ENCODE measurements at regions of chr1 and their contacts with region 1.

Region 1: DNA sequence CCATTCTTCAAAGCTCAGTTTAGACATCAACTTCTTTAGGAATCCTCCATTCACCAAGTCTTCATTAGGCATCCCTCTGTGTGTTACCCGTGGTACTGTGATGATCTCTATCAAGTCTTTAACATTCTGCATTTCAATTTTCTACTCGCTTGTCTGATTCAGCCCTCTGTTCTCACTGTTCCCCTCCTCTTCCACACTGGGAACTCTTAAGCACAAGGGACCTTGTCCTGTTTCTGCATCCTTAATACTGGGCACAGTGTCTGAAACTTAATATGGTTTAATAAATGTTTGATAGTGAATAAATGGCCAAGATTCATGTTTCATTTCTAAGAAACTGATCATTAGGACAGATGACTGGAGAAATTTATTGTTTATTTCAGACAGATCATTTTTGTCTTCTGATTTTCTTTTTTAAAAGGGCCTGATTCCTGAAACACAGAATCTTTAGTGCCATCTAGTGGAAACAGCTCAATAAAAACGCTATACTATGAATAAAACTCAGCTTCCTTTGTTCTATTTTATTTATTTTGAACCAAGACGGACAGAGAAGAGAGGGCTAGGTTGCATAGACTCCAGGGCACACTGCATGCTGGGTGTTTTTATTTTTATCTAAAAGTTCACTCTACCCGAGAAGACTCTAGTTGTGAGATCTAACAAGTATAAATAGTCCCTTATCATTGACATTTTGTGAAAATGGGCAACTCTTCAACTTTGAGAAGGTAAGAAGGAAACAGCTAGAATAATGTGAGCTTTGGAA is 7.0 kb upstream of the TRIM45 start:
- DNase-seq: peak in 4 of 5 donors; percentile 28 to 38 (median 33)
- H3K4me3 ChIP-seq: no peak overlapping the region
- H3K4me3 Mint-ChIP-seq: no peak overlapping the region
- H3K27ac ChIP-seq: no peak overlapping the region
- H3K27ac Mint-ChIP-seq: peak overlapping the region in 1 of 7 donors; percentile 8
- H3K4me1 ChIP-seq: no peaks in the 10 kb centered on the region
- H3K4me1 Mint-ChIP-seq: peaks cover 0 to 5% (median 2%) of the 10 kb centered on the region in 4 donors
- H3K27me3 ChIP-seq: no peaks in the 10 kb centered on the region
- H3K27me3 Mint-ChIP-seq: peaks cover 7 to 16% of the 10 kb centered on the region in 2 donors

Region 2: DNA sequence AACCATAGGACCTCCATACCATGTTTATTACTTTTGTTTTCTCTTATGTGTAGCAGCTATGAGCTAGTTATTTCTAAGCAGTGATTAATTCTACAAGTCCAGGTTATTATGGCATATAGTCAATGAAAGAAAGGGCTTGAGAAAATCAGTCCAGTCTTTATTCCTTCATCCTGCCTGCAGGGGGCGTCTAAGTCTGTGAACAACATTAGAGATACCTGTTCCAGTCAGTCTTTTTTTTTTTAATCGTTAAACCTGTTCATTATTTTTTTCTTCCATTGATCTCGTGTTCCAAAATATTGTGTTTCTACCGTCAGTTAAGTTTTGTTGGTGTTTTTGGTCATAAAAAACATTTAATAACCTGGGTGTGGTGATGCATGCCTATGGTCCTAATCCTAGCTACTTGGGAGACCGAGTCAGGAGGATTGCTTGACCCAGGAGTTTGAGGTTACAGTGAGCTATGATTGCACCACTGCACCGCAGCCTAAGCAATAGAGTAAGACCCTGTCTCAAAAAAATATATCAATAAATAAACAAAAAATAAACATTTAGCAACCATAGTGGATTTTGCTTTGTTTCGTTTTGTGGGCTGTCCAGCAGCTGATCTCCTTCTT is 403.6 kb before region 1 on chr1:
- CTCF ChIA-PET with region 1: interaction called, 12 read pairs
- POLR2A ChIA-PET with region 1: no interaction called
- intact Hi-C with region 1: loop called (anchors 1 kb)
- DNase-seq: peak; percentile 67 to 81 (median 73)
- H3K4me3 ChIP-seq: no peak overlapping the region
- H3K4me3 Mint-ChIP-seq: no peak overlapping the region
- H3K27ac ChIP-seq: no peak overlapping the region
- H3K27ac Mint-ChIP-seq: peak overlapping the region in 3 of 7 donors; percentile 1 to 47 (median 39)
- H3K4me1 ChIP-seq: peaks cover 13% of the 10 kb centered on the region
- H3K4me1 Mint-ChIP-seq: peaks cover 6 to 27% (median 12%) of the 10 kb centered on the region in 4 donors
- H3K27me3 ChIP-seq: no peaks in the 10 kb centered on the region
- H3K27me3 Mint-ChIP-seq: no peaks in the 10 kb centered on the region

Region 3: GRCh38 chr1:117067533-117068370 is 60.7 kb before region 1 on chr1:
- CTCF ChIA-PET with region 1: interaction called, 111 read pairs
- POLR2A ChIA-PET with region 1: interaction called, 4 read pairs
- intact Hi-C with region 1: loop called (anchors 1 kb)
- DNase-seq: peak in 4 of 5 donors; percentile 22 to 45 (median 40)
- H3K4me3 ChIP-seq: no peak overlapping the region
- H3K4me3 Mint-ChIP-seq: no peak overlapping the region
- H3K27ac ChIP-seq: no peak overlapping the region
- H3K27ac Mint-ChIP-seq: no peak overlapping the region
- H3K4me1 ChIP-seq: peaks cover 7% of the 10 kb centered on the region
- H3K4me1 Mint-ChIP-seq: peaks cover 8 to 23% (median 17%) of the 10 kb centered on the region in 4 donors
- H3K27me3 ChIP-seq: no peaks in the 10 kb centered on the region
- H3K27me3 Mint-ChIP-seq: no peaks in the 10 kb centered on the region

Region 4: DNA sequence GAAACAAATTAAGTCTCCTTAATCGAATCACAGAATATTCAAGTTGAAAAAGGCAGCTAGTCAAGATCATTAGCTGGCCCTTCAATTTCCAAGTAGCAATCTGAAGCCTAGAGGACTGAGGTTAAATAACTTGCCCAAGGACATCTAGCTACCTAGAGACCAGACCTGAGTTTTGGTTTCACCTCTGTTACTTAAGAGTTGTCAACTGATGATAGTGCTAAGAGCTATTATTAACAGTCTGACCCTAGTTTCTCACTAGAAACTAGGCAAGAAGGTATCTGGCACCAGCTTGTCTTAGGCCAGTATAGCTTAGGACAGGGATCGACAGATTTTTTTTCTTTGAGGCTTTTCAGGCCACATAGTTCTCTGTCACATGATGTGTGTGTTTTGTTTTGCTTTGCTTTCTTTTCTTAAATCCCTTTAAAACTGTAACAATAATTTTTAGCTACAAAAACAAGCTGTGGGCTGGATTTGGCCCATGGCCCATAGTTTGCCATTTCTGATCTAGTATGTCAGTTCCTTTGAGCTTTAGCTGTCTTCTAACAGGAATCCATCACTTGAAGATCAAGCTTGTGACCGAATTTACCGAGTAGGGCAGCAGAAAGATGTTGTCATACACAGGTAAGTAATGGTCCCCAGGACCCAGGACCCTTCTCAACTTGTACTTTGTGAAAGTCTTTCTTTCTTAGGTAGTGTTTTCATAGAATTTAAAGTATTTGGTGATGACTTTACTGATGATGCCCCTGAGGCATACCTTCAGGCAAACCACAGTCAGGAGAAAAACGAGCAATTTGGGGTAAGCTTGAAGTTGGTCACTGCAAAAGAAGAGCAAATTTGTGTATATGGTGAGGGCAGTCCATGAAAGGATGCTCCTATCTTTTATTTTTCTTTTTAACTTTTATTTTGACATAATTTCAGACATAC is 30.0 kb before region 1 on chr1:
- CTCF ChIA-PET with region 1: interaction called, 10 read pairs
- POLR2A ChIA-PET with region 1: no interaction called
- intact Hi-C with region 1: no loop called
- DNase-seq: no peak
- H3K4me3 ChIP-seq: no peak overlapping the region
- H3K4me3 Mint-ChIP-seq: no peak overlapping the region
- H3K27ac ChIP-seq: no peak overlapping the region
- H3K27ac Mint-ChIP-seq: no peak overlapping the region
- H3K4me1 ChIP-seq: peaks cover 5% of the 10 kb centered on the region
- H3K4me1 Mint-ChIP-seq: peaks cover 4 to 7% (median 5%) of the 10 kb centered on the region in 4 donors
- H3K27me3 ChIP-seq: no peaks in the 10 kb centered on the region
- H3K27me3 Mint-ChIP-seq: no peaks in the 10 kb centered on the region

Region 5: DNA sequence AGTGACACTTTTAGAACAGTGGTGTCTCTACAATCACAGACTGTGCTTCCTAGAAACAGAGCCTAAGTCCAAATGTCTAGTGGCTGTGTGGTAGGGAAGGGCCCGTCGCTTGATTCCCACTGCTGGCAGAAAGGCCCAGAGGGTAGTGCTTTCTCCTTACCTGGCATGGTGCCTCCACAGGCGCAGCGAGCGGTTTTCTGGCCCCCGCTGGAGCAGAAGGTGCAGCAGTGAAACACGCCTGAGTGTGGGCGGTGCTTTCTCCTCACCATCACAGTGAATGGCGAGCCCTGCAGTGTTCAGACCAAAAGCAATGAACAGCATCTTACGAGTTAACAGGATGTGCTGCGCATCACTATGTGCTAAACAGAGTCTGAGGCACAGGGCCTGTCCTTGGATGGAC is 15.3 kb before region 1 on chr1:
- CTCF ChIA-PET with region 1: interaction called, 25 read pairs
- POLR2A ChIA-PET with region 1: no interaction called
- intact Hi-C with region 1: no loop called
- DNase-seq: no peak
- H3K4me3 ChIP-seq: no peak overlapping the region
- H3K4me3 Mint-ChIP-seq: no peak overlapping the region
- H3K27ac ChIP-seq: no peak overlapping the region
- H3K27ac Mint-ChIP-seq: peak overlapping the region in 2 of 7 donors; percentile 7 to 21
- H3K4me1 ChIP-seq: peaks cover 11% of the 10 kb centered on the region
- H3K4me1 Mint-ChIP-seq: peaks cover 14 to 28% (median 19%) of the 10 kb centered on the region in 4 donors
- H3K27me3 ChIP-seq: no peaks in the 10 kb centered on the region
- H3K27me3 Mint-ChIP-seq: no peaks in the 10 kb centered on the region

Region 6: DNA sequence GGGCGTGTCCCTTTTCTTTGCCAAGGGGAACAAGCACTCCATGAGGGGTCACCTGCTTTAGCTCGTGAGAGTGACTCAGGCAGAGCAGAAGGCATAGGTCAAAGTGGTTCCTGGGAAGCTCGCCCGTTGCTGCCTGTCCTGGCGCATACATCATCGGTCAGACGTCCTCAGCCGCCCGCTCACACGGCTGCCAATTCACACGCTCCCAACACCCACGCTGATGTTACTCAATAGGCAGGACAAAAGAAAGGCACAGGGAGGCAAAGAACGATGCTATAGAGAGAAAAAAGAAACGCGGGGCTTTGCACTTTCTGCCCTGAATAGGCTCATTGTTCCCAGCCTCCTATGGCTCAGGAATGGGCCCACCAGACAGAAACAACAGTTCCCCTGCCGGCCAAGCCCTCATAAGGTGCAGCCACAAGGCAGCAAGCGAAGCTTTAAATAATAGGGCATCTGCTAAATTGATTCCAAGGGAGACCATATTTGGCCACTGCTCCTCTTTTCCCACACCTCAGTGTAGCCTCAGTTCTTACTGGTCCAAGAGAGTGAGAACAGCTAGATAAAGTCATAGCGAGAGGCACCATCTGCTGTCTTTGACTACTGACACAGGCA is 43.5 kb after region 1 on chr1:
- CTCF ChIA-PET with region 1: no interaction called
- POLR2A ChIA-PET with region 1: no interaction called
- intact Hi-C with region 1: no loop called
- DNase-seq: no peak
- H3K4me3 ChIP-seq: no peak overlapping the region
- H3K4me3 Mint-ChIP-seq: no peak overlapping the region
- H3K27ac ChIP-seq: no peak overlapping the region
- H3K27ac Mint-ChIP-seq: no peak overlapping the region
- H3K4me1 ChIP-seq: no peaks in the 10 kb centered on the region
- H3K4me1 Mint-ChIP-seq: no peaks in the 10 kb centered on the region
- H3K27me3 ChIP-seq: no peaks in the 10 kb centered on the region
- H3K27me3 Mint-ChIP-seq: peaks cover 3 to 6% of the 10 kb centered on the region in 2 donors

Region 7: DNA sequence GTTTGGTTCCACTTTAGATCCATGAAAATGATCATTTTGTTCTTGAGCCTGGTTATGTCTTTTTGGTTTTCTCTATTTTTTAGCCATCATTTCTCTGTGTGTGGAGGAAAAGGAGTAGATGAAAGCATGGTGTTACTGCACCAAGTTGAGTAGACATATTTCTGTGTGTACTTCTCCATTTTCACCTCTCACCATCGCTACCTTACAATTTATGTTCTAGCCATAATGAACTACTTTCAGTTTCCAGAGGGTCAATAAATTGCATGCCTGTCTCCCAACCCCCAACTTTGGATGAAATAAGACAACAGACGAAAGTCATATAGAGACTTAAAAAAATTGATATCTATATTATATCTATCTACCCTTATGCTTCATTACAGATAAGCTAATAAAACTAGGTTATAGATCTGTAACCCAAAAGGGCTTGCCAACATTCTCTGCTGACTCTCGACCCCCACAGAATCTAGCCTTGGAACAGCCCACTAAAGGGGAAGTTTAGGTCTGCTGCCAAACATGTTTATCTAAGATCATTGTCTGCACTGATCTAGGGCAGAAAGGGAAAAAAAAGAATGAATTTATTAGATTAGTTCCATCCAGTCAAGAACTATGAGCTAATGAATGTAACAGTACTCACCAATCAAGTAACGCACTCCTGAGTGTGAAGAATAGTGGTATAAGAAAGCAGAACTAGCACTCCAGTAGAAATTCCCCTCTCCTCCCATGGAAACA is 231.2 kb after region 1 on chr1:
- CTCF ChIA-PET with region 1: no interaction called
- POLR2A ChIA-PET with region 1: no interaction called
- intact Hi-C with region 1: no loop called
- DNase-seq: no peak
- H3K4me3 ChIP-seq: no peak overlapping the region
- H3K4me3 Mint-ChIP-seq: peak overlapping the region in 6 of 8 donors; percentile 38 to 68 (median 49)
- H3K27ac ChIP-seq: no peak overlapping the region
- H3K27ac Mint-ChIP-seq: peak overlapping the region; percentile 6 to 85 (median 42)
- H3K4me1 ChIP-seq: peaks cover 53% of the 10 kb centered on the region
- H3K4me1 Mint-ChIP-seq: peaks cover 33 to 73% (median 41%) of the 10 kb centered on the region in 4 donors
- H3K27me3 ChIP-seq: no peaks in the 10 kb centered on the region
- H3K27me3 Mint-ChIP-seq: no peaks in the 10 kb centered on the region